ENCODE measurements at regions of chr1 and their contacts with region 1.

Region 1: DNA sequence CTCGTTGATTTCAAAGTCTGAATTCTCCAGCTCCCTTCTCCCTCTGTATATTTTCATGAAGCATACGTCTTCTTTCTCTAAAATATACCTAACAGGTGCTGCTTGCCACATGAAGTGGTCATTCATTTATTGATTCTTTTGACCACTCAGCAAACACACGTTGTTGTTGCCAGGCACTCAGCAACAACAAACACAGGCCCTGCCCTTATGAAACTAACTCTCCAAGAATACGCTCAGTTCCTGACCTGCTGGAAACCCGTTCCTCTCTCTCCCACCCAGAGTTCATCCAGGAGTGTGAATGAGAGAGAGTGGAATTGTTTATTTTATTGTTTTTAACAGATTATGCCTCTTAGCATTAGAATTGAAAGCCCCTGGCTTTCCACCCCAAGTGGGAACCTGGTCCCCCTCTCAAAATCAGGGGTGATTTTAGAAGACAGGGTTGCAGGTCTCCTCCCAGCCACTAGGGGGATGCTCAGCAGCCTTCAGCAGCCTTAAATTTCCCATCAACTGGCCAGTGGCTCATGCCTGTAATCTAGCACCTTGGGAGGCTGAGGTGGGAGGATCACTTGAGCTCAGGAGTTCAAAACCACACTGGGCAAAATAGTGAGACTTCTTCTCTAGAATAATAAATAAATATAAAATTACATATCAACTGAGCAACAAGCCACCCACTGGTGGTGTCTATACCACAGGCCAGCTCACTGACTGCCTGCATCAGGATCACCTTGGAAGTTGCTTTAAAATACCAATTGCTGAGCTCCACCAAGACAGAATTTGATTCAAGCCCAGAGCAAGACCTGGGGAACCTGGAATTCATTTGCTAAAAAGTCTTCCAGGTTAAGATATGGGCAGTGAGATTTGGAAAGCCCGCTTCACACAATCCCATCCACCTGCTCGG is 181.0 kb upstream of the KLHDC7A start:
- DNase-seq: peak in 1 of 6 donors; percentile 21
- ATAC-seq: peak in 3 of 4 donors; percentile 40 to 71 (median 68)
- H3K4me3 ChIP-seq: no peak overlapping the region
- H3K27ac ChIP-seq: no peak overlapping the region
- H3K4me1 ChIP-seq: no peaks in the 10 kb centered on the region
- H3K27me3 ChIP-seq: no peaks in the 10 kb centered on the region
- CTCF ChIP-seq: peak; percentile 38 to 74 (median 66)

Region 2: DNA sequence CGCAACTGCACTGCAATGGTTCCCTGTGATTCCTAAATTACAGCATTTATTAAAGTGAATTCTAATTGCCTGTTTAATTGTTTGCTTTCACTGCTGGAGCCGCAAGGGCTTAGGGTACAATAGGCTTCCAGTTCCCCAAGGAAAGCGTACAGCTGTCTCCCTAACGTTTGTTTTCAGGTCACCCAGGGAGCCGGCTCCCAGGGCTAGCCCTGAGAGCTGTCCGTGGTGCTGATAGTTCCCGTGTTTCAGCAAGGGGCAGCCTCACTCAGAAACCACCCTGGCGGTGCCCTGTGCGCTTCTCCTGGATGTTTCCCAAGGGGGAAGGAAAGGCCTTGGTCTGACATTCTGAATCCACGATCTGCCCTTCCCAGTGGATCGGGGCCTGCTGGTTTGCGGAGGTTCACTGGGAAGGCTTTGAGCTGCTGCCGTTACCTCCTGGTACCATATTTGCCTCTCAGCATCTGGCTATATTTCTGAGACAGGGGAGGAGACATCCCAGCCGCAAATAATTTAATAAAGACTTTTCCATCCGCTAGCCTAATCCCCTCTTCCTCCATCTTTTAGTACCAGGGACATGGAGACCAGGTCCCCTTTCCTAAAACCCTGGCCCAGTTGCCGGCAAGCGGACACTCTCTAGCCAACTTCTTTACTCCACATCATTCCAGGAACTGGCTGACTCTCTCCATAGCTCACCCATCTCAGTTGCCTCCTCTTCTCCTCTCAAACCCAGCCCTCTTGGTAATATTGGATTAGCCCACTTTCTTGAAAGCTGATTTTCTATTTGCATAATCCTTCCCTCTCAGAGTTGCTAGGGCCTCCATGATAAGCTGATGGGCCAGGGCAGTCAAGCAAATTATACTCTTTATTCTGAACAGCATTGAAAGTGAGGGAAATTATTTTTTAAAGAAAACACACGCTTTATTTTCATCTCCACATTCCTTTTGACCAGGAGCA is 43.1 kb before region 1 on chr1:
- intact Hi-C with region 1: no loop called
- DNase-seq: peak; percentile 52 to 85 (median 70)
- ATAC-seq: peak in 3 of 4 donors; percentile 62 to 89 (median 81)
- H3K4me3 ChIP-seq: no peak overlapping the region
- H3K27ac ChIP-seq: no peak overlapping the region
- H3K4me1 ChIP-seq: no peaks in the 10 kb centered on the region
- H3K27me3 ChIP-seq: no peaks in the 10 kb centered on the region
- CTCF ChIP-seq: no peak

Region 3: GRCh38 chr1:18575620-18576019 is 275.9 kb after region 1 on chr1:
- intact Hi-C with region 1: loop called in 1 of 3 experiments (anchors 10 kb)
- DNase-seq: peak in 4 of 6 donors; percentile 40 to 89 (median 60)
- ATAC-seq: peak in 3 of 4 donors; percentile 53 to 83 (median 71)
- H3K4me3 ChIP-seq: no peak overlapping the region
- H3K27ac ChIP-seq: no peak overlapping the region
- H3K4me1 ChIP-seq: no peaks in the 10 kb centered on the region
- H3K27me3 ChIP-seq: no peaks in the 10 kb centered on the region
- CTCF ChIP-seq: peak in 2 of 4 donors; percentile 47 to 71